ENCODE measurements at regions of chr6 and their contacts with region 1.

Region 1: GRCh38 chr6:130027948-130028347 is 9.6 kb downstream of the L3MBTL3 start:
- DNase-seq: no peak
- H3K4me3 Mint-ChIP-seq: no peak overlapping the region
- H3K27ac Mint-ChIP-seq: peak overlapping the region; percentile 14
- H3K4me1 Mint-ChIP-seq: peaks cover 49% of the 10 kb centered on the region
- H3K27me3 Mint-ChIP-seq: no peaks in the 10 kb centered on the region

Region 2: DNA sequence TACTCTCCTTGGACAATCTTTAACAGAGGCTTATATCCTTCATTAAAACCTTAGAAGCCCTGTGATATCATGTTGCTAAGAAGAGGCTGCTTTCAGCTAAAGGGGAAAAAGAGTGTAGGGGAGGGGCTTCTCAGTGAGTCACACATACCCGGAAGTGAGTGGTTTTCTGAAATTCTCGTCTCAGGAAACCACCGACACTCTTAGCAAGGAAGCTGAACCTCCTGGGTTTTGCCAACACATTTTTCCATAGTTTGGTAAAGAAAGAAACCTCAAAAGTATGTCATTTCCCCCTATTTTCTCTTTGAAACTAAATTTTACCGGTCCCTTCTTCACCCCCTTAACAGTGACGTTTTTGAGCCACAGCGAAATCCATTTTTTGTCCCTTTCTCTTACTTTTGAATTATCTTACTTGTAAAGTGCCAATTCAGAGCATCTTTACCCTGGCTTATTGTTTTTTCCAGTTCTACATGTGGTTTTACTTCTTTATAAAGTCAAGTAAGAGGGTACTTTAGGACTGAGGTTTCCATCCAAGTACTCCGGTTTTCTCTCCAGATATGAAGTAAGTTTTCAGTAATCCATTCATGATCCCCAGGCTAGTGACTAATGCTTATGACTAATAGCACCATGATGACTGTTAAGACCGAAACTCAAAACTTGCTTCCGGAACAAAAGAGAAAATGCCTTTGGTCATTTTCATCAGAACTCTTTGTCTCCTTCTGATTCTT is 537.3 kb before region 1 on chr6:
- CTCF ChIA-PET with region 1: no interaction called
- intact Hi-C with region 1: loop called (anchors 1 kb)
- DNase-seq: peak; percentile 79
- H3K4me3 Mint-ChIP-seq: peak overlapping the region; percentile 67
- H3K27ac Mint-ChIP-seq: peak overlapping the region; percentile 100
- H3K4me1 Mint-ChIP-seq: peaks cover 70% of the 10 kb centered on the region
- H3K27me3 Mint-ChIP-seq: no peaks in the 10 kb centered on the region

Region 3: GRCh38 chr6:130189531-130190397 is 161.8 kb after region 1 on chr6:
- CTCF ChIA-PET with region 1: no interaction called
- intact Hi-C with region 1: loop called (anchors 5 kb)
- DNase-seq: no peak
- H3K4me3 Mint-ChIP-seq: no peak overlapping the region
- H3K27ac Mint-ChIP-seq: no peak overlapping the region
- H3K4me1 Mint-ChIP-seq: peaks cover 67% of the 10 kb centered on the region
- H3K27me3 Mint-ChIP-seq: no peaks in the 10 kb centered on the region

Region 4: GRCh38 chr6:130620338-130620781 is 592.4 kb after region 1 on chr6:
- CTCF ChIA-PET with region 1: no interaction called
- intact Hi-C with region 1: loop called (anchors 5 kb)
- DNase-seq: no peak
- H3K4me3 Mint-ChIP-seq: no peak overlapping the region
- H3K27ac Mint-ChIP-seq: no peak overlapping the region
- H3K4me1 Mint-ChIP-seq: peaks cover 14% of the 10 kb centered on the region
- H3K27me3 Mint-ChIP-seq: no peaks in the 10 kb centered on the region

Measured in activated naive CD4-positive, alpha-beta T cell treated with anti-CD3 and anti-CD28 coated beads for 36 hours (primary cell).